Left cardiac atrium (tissue), 4 donors: ENCODE measurements at regions of chr5 and their contacts with region 1.

Region 1: GRCh38 chr5:55680353-55680752 is 31.8 kb downstream of the SLC38A9 start:
- DNase-seq: no peak
- ATAC-seq: peak in 1 of 2 donors; percentile 36

Region 2: GRCh38 chr5:54861212-54861894 is 819.0 kb before region 1 on chr5:
- intact Hi-C with region 1: no loop called
- DNase-seq: no peak
- ATAC-seq: no peak

Region 3: DNA sequence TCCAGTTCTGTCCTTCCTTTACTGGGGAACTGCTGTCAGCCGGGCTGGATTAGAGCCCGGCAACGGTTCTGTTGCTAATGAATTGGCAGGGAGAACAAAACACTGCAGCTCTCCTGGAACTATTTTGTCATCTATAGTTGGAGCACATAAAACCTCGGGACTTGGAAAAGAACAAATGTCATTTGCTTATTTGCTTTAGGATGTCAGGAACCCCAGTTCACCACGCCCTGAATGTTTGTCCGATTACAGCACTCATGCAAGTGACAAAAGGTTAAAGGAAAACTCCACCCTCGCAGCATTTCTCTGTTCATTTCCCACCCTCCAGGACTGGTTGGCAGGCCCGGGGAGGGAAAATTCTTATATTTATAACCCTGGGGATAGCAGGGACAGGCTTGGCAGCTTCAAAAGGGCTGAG is 79.1 kb before region 1 on chr5:
- intact Hi-C with region 1: loop called in 1 of 2 experiments (anchors 10 kb)
- DNase-seq: peak; percentile 85
- ATAC-seq: peak; percentile 80